ENCODE measurements at regions of chr2 and their contacts with region 1.

Region 1: GRCh38 chr2:191637182-191638078 is 40.5 kb upstream of the NABP1 start:
- DNase-seq: no peak
- H3K4me3 Mint-ChIP-seq: peak overlapping the region; percentile 49
- H3K27ac Mint-ChIP-seq: peak overlapping the region; percentile 89
- H3K4me1 Mint-ChIP-seq: peaks cover 58% of the 10 kb centered on the region
- H3K27me3 Mint-ChIP-seq: no peaks in the 10 kb centered on the region

Region 2: DNA sequence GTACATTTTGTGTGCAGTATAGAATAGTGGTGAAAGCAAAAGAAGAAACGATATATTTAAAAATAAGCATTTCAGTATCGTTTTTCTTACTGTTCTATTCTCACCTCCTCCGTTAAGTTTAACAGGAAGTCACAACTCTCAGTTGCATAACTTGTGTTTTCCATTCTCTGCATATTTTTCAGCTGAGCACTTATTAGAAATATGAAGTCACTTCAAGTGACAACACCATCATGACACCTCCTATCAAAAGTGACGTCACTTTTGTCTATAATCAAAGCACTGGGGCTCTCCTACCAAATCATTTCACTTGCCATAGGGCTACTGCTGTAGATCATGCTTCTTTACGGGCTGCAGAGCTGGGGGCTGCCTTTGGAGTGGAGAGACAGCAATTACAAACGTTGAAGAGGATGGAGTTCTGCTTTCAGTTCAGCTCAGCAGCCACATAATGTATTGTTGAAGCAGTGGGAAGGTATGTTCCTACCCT is 523.0 kb before region 1 on chr2:
- CTCF ChIA-PET with region 1: no interaction called
- POLR2A ChIA-PET with region 1: no interaction called
- intact Hi-C with region 1: loop called (anchors 5 kb)
- DNase-seq: peak; percentile 57
- H3K4me3 Mint-ChIP-seq: peak overlapping the region; percentile 66
- H3K27ac Mint-ChIP-seq: peak overlapping the region; percentile 88
- H3K4me1 Mint-ChIP-seq: peaks cover 70% of the 10 kb centered on the region
- H3K27me3 Mint-ChIP-seq: no peaks in the 10 kb centered on the region

Region 3: GRCh38 chr2:191333911-191334357 is 303.5 kb before region 1 on chr2:
- CTCF ChIA-PET with region 1: no interaction called
- POLR2A ChIA-PET with region 1: no interaction called
- intact Hi-C with region 1: no loop called
- DNase-seq: no peak
- H3K4me3 Mint-ChIP-seq: no peak overlapping the region
- H3K27ac Mint-ChIP-seq: no peak overlapping the region
- H3K4me1 Mint-ChIP-seq: no peaks in the 10 kb centered on the region
- H3K27me3 Mint-ChIP-seq: no peaks in the 10 kb centered on the region

Region 4: GRCh38 chr2:191566344-191566743 is 71.1 kb before region 1 on chr2:
- CTCF ChIA-PET with region 1: interaction called, 9 read pairs
- POLR2A ChIA-PET with region 1: interaction called, 7 read pairs
- intact Hi-C with region 1: loop called (anchors 1 kb)
- DNase-seq: peak; percentile 75
- H3K4me3 Mint-ChIP-seq: no peak overlapping the region
- H3K27ac Mint-ChIP-seq: no peak overlapping the region
- H3K4me1 Mint-ChIP-seq: peaks cover 21% of the 10 kb centered on the region
- H3K27me3 Mint-ChIP-seq: peaks cover 4% of the 10 kb centered on the region

Region 5: GRCh38 chr2:191625016-191625415 is 12.4 kb before region 1 on chr2:
- CTCF ChIA-PET with region 1: interaction called, 6 read pairs
- POLR2A ChIA-PET with region 1: interaction called, 13 read pairs
- intact Hi-C with region 1: loop called (anchors 1 kb)
- DNase-seq: peak; percentile 75
- H3K4me3 Mint-ChIP-seq: peak overlapping the region; percentile 35
- H3K27ac Mint-ChIP-seq: peak overlapping the region; percentile 89
- H3K4me1 Mint-ChIP-seq: peaks cover 84% of the 10 kb centered on the region
- H3K27me3 Mint-ChIP-seq: no peaks in the 10 kb centered on the region

Region 6: DNA sequence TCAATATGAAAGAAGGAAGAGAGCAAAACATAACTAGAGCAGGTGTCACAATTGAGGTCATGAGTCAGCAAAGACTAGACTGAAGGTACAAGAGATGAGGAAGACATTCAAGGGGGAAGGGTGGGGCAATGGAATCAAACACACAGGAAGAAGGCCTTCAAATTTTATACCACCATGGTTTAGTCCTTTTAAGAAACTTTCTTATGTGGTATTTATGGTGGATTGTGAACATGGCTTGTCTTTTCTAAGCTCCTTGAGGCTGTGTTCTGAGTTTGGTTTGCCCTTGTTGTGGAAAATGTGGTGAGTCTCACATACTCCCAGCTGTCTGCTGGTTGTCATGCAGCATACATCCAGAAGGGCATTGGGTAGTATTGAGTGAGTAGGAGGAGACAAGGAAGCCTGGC is 102.6 kb after region 1 on chr2:
- CTCF ChIA-PET with region 1: no interaction called
- POLR2A ChIA-PET with region 1: no interaction called
- intact Hi-C with region 1: loop called (anchors 5 kb)
- DNase-seq: peak; percentile 54
- H3K4me3 Mint-ChIP-seq: no peak overlapping the region
- H3K27ac Mint-ChIP-seq: peak overlapping the region; percentile 50
- H3K4me1 Mint-ChIP-seq: peaks cover 15% of the 10 kb centered on the region
- H3K27me3 Mint-ChIP-seq: peaks cover 2% of the 10 kb centered on the region

Measured in activated CD4-positive, alpha-beta memory T cell treated with anti-CD3 and anti-CD28 coated beads for 36 hours (primary cell).